Posterior vena cava (tissue), 2 donors: ENCODE measurements at regions of chr7 and their contacts with region 1.

Region 1: DNA sequence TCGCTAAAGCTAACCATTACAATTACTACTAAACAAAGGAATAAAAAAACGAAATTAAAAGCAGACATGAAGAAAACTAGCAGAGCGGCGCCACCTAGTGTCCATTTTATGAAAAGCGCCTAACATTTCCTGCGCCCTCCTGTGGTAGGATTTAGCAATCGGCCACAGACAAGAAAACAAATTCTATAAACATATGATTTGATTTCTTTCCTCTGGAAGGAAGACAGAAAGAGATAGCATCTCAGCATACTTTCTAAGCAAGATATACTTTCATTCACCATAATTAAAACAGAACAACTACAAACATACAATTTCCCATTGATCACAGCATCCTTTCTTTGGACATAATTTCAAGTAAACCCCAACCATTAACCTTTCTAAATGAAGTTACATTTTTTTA is 337.7 kb upstream of the NPVF start:
- DNase-seq: no peak

Region 2: GRCh38 chr7:25742316-25742715 is 176.4 kb after region 1 on chr7:
- intact Hi-C with region 1: no loop called
- DNase-seq: no peak

Region 3: DNA sequence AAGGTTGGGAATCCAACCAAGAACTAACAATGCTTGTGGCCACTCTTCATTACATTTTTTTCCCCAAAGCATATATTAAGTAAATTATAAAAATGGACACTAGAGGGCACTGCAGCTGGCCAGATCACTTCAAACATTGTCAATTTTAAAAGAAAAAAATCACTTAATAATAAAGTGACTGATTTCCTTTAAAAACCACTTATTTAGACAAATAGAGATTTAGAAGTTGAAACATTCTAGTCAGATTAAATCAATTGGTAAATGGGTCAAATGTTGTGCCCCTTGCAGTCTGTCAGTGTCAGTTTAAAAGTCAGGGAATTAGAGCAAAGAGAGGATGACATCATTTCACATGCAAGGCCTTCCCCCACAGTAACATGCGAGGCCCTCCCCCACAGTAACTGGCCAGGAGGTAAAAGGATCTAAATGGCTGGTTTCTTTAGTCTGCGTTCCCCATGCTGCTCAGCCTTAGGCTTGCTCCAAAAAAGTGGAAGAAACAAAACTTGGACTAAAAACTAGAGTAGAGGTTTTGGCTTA is 1120.6 kb after region 1 on chr7:
- intact Hi-C with region 1: no loop called
- DNase-seq: no peak

Region 4: GRCh38 chr7:27088002-27088922 is 1522.3 kb after region 1 on chr7:
- intact Hi-C with region 1: loop called in 1 of 2 experiments (anchors 5 kb)
- DNase-seq: no peak